Activated CD4-positive, alpha-beta memory T cell treated with anti-CD3 and anti-CD28 coated beads for 36 hours (primary cell): ENCODE measurements at regions of chr9 and their contacts with region 1.

Region 1: GRCh38 chr9:136885950-136886578 is at the start of gene TRAF2:
- DNase-seq: peak; percentile 99
- H3K4me3 Mint-ChIP-seq: peak within 1 kb of the TSS; percentile 91
- H3K27ac Mint-ChIP-seq: peak within 1 kb of the TSS; percentile 89
- H3K4me1 Mint-ChIP-seq: peaks cover 39% of the 10 kb centered on the region
- H3K27me3 Mint-ChIP-seq: no peaks in the 10 kb centered on the region
- total RNA-seq, gene TRAF2: 40.0 to 41.4 TPM

Region 2: GRCh38 chr9:136539427-136540421 is 346.3 kb before region 1 on chr9:
- CTCF ChIA-PET with region 1: no interaction called
- POLR2A ChIA-PET with region 1: interaction called, 3 read pairs
- intact Hi-C with region 1: loop called (anchors 10 kb)
- DNase-seq: peak; percentile 99
- H3K4me3 Mint-ChIP-seq: peak overlapping the region; percentile 78
- H3K27ac Mint-ChIP-seq: peak overlapping the region; percentile 99
- H3K4me1 Mint-ChIP-seq: peaks cover 73% of the 10 kb centered on the region
- H3K27me3 Mint-ChIP-seq: no peaks in the 10 kb centered on the region

Region 3: DNA sequence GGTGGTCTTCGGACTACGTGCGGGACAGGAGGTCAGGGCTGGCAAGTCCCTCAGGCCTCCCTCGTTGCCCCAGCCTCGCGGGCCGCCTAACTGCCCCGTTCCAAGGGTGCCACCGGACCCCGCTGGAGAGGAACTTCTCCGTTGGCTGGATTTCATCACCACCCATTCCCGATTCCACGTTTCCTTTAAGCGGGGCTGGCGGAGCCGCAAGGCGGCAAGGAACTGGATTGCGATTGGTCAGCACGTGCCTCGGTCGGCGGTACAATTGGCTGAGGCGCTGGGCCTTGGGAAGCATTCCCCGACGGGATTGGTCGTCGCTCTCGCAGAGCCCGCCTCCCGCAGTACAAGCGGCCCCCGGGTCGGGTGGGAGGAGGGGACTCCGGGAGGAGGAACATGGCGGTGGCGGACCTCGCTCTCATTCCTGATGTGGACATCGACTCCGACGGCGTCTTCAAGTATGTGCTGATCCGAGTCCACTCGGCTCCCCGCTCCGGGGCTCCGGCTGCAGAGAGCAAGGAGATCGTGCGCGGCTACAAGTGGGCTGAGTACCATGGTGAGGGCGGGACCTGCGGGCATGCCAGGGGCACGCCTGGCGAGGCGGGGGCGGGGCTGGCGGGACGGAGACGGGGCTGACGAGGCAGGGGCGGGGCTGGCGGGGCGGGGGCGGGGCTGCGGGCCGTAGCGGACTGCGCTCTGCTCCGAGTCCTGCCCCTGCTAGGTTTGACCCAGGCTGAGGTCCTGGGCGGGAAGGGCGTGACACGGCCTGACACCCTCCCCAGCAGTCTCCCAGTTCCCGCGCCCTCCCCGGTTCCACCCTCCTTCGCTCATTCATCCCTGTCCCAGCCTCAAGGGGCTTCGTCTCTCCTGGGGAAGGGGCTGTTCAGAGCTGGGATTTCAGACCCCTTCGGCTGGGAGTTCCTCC is 36.8 kb before region 1 on chr9 and contains the start of gene PHPT1:
- CTCF ChIA-PET with region 1: interaction called, 8 read pairs
- POLR2A ChIA-PET with region 1: interaction called, 6 read pairs
- intact Hi-C with region 1: loop called (anchors 1 kb)
- DNase-seq: peak; percentile 98
- H3K4me3 Mint-ChIP-seq: peak within 1 kb of the TSS; percentile 85
- H3K27ac Mint-ChIP-seq: peak within 1 kb of the TSS; percentile 90
- H3K4me1 Mint-ChIP-seq: peaks cover 19% of the 10 kb centered on the region
- H3K27me3 Mint-ChIP-seq: peaks cover 17% of the 10 kb centered on the region
- total RNA-seq, gene PHPT1: 92.2 to 95.5 TPM

Region 4: DNA sequence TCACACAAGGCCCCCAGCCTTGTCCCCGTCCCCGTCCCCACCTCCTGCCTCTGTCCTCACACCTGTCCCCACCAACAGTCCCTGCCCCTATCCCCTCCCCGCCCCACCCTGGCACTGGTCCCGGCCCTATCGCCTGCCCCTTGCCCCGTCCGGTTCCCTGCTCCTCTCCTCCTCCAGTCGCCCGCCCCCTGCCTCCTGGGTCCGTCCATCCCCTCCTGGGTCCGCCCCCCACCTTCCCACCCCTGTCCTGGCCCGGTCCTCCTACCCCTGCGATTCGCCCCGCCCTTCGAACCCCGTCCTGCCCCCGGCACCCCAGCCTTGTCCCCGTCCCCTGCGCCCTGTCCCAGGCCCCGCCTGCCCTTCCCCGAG is 20.3 kb before region 1 on chr9:
- CTCF ChIA-PET with region 1: interaction called, 5 read pairs
- POLR2A ChIA-PET with region 1: interaction called, 6 read pairs
- intact Hi-C with region 1: loop called (anchors 1 kb)
- DNase-seq: no peak
- H3K4me3 Mint-ChIP-seq: peak overlapping the region; percentile 87
- H3K27ac Mint-ChIP-seq: peak overlapping the region; percentile 67
- H3K4me1 Mint-ChIP-seq: peaks cover 18% of the 10 kb centered on the region
- H3K27me3 Mint-ChIP-seq: no peaks in the 10 kb centered on the region

Region 5: GRCh38 chr9:136902259-136902821 is 16.3 kb after region 1 on chr9:
- CTCF ChIA-PET with region 1: interaction called, 13 read pairs
- POLR2A ChIA-PET with region 1: interaction called, 26 read pairs
- intact Hi-C with region 1: loop called (anchors 1 kb)
- DNase-seq: peak; percentile 95
- H3K4me3 Mint-ChIP-seq: peak overlapping the region; percentile 70
- H3K27ac Mint-ChIP-seq: peak overlapping the region; percentile 98
- H3K4me1 Mint-ChIP-seq: peaks cover 51% of the 10 kb centered on the region
- H3K27me3 Mint-ChIP-seq: no peaks in the 10 kb centered on the region

Region 6: DNA sequence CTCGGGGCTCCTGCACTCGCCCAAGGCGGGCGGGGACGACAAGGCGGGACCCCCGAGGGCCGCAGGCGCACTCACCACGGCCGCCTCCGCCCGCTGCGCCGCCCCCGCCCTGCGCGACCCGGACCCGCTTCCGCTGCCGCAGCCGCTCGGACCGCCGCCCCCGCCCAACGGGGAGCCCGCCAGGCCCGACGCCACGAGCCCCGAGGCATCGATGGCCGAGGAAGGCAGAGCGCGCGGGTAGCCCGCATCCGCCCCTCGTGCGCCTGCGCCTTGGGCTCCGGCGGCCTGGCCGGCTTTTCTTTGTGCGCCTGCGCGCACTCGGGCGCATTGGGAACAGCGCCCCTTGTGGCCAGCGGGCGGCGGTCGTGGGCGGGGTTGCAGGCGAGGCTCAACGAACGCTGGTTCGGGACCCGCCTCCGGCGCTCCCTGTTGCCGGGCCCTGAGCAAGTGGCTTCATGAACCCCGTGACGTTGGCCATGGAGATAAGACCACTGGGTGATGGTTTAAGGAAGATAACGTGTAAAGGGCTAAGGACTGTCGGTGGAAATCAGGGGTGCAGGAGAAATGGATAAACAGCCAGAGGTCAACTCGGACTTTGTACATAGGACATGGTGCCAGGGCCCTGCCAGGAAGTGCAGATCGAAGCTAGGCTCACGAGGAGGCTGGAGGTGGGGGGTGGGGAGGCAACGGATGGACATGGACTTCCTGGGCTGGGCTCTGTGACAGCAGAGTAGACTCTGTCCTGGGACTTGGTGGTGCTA is 58.6 kb after region 1 on chr9 and contains the starts of genes C8G and FBXW5:
- CTCF ChIA-PET with region 1: interaction called, 8 read pairs
- POLR2A ChIA-PET with region 1: interaction called, 4 read pairs
- intact Hi-C with region 1: loop called (anchors 1 kb)
- DNase-seq: peak; percentile 96
- H3K4me3 Mint-ChIP-seq: peak within 1 kb of the TSS; percentile 80
- H3K27ac Mint-ChIP-seq: peak within 1 kb of the TSS; percentile 86
- H3K4me1 Mint-ChIP-seq: peaks cover 12% of the 10 kb centered on the region
- H3K27me3 Mint-ChIP-seq: no peaks in the 10 kb centered on the region
- total RNA-seq, gene C8G: 0.90 to 0.94 TPM
- total RNA-seq, gene FBXW5: 66.8 to 69.4 TPM

Region 7: GRCh38 chr9:137200311-137201204 is 314.5 kb after region 1 on chr9 and contains the start of gene TPRN:
- CTCF ChIA-PET with region 1: no interaction called
- POLR2A ChIA-PET with region 1: no interaction called
- intact Hi-C with region 1: loop called (anchors 10 kb)
- DNase-seq: peak; percentile 99
- H3K4me3 Mint-ChIP-seq: peak within 1 kb of the TSS; percentile 82
- H3K27ac Mint-ChIP-seq: peak within 1 kb of the TSS; percentile 67
- H3K4me1 Mint-ChIP-seq: peaks cover 26% of the 10 kb centered on the region
- H3K27me3 Mint-ChIP-seq: no peaks in the 10 kb centered on the region
- total RNA-seq, gene TPRN: 6.1 to 6.7 TPM